Activated CD4-positive, alpha-beta memory T cell treated with anti-CD3 and anti-CD28 coated beads for 36 hours (primary cell): ENCODE measurements at regions of chr7 and their contacts with region 1.

Region 1: GRCh38 chr7:99918959-99919813 is at the start of gene TRIM4:
- DNase-seq: peak; percentile 96
- H3K4me3 Mint-ChIP-seq: peak within 1 kb of the TSS; percentile 98
- H3K27ac Mint-ChIP-seq: peak within 1 kb of the TSS; percentile 98
- H3K4me1 Mint-ChIP-seq: peaks cover 43% of the 10 kb centered on the region
- H3K27me3 Mint-ChIP-seq: no peaks in the 10 kb centered on the region
- total RNA-seq, gene TRIM4: 24.9 to 26.1 TPM

Region 2: DNA sequence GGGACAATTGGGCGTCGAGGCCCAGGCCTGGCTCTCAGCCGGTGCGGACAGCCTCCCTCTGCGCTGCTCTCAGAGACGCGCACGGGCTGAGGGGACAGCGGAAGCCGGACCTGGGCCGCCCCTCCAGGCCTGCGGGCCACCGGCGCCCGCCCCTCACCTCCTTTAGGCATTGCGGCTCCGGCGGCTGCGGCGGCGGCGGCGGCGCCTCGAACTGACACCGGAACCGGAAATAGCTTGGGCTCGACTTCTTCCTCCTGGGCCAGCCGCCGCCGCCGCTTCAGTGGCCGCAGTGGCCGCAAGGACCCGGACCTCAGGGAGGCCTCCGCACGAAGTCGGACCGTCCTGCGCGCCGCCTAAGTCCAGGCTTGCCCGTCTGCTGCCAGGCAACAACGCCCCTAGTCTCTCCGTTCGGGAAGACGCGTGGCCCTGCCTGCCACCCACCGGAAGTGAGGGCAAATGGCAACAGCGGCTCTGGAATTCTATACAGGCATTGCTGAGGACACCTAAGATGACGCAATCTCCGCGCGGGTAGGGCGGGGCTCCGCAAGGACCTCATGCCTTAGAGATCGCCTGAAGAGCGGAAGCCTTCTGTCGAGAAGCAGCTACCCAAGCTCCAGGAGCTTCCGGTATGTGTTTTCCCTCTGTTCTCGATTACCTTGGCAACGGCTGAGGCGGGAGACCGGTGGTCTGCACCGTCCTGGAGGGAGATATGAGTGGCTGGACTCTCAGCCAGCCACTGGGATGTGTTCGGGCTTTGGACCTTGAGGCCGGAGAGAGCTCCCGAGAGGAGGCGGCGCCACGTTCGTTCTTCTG is 510.6 kb before region 1 on chr7 and contains the starts of genes BUD31 and PDAP1:
- CTCF ChIA-PET with region 1: no interaction called
- POLR2A ChIA-PET with region 1: no interaction called
- intact Hi-C with region 1: loop called (anchors 1 kb)
- DNase-seq: peak; percentile 97
- H3K4me3 Mint-ChIP-seq: peak within 1 kb of the TSS; percentile 99
- H3K27ac Mint-ChIP-seq: peak within 1 kb of the TSS; percentile 99
- H3K4me1 Mint-ChIP-seq: peaks cover 41% of the 10 kb centered on the region
- H3K27me3 Mint-ChIP-seq: no peaks in the 10 kb centered on the region
- total RNA-seq, gene BUD31: 143 to 149 TPM
- total RNA-seq, gene PDAP1: 149 to 162 TPM

Region 3: DNA sequence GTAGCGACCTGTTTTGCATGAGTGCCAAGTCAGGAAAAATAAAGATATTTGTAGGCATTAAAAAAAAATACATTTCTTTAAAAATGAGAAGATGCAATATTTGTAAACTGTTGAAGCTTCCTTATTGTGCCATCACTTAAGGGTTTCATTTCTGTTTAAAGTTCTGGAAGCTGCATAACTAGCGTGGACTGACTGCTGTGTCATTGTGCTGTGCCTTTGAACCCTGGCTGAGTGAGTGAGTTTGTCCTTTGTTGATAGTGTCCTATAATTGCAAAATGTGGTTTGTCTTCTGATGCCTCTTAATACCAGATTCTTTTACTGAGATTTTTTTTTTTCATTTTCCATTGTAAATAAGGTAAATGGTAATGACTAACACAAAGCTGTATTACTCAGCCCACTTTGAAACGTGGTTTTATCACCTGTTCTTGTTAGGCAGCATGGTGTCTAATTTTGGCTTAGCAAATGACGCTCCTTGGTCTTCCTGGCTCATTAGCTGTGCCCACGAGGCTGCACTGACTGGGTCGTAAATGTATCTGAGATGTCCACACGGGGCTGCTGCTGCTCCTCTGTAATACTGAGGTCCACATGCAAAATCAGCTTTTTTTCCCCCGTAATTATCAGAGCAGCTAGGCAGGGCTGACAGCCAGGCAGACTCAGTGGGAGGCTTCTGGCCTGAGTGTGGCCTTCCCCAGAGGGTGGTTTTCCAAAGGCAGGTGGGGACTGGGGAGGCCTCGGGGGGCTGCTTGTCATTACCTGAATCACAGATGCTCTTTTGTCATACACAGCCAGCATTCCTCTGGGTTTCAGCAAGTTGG is 287.7 kb before region 1 on chr7:
- CTCF ChIA-PET with region 1: interaction called, 6 read pairs
- POLR2A ChIA-PET with region 1: no interaction called
- intact Hi-C with region 1: loop called (anchors 10 kb)
- DNase-seq: peak; percentile 60
- H3K4me3 Mint-ChIP-seq: no peak overlapping the region
- H3K27ac Mint-ChIP-seq: peak overlapping the region; percentile 72
- H3K4me1 Mint-ChIP-seq: peaks cover 22% of the 10 kb centered on the region
- H3K27me3 Mint-ChIP-seq: no peaks in the 10 kb centered on the region

Region 4: DNA sequence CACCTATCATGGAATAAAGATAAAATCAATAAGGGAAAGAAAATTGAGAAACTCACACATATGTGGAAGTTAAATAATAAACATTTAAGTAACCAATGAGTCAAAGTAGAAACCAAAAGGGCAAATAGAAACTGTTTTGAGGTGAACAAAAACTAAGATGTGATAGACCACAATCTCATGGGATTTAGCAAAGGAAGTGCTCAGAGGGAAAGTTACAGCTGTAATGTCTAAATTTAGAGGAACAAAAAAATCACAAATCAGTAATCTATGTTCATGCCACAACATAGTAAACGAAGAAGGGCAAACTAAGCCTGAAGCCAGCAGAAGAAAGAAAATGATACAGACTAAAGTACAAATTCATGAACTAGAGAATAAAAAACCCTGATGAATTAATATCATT is 151.5 kb before region 1 on chr7:
- CTCF ChIA-PET with region 1: no interaction called
- POLR2A ChIA-PET with region 1: no interaction called
- intact Hi-C with region 1: no loop called
- DNase-seq: no peak
- H3K4me3 Mint-ChIP-seq: no peak overlapping the region
- H3K27ac Mint-ChIP-seq: no peak overlapping the region
- H3K4me1 Mint-ChIP-seq: peaks cover 4% of the 10 kb centered on the region
- H3K27me3 Mint-ChIP-seq: peaks cover 31% of the 10 kb centered on the region

Region 5: DNA sequence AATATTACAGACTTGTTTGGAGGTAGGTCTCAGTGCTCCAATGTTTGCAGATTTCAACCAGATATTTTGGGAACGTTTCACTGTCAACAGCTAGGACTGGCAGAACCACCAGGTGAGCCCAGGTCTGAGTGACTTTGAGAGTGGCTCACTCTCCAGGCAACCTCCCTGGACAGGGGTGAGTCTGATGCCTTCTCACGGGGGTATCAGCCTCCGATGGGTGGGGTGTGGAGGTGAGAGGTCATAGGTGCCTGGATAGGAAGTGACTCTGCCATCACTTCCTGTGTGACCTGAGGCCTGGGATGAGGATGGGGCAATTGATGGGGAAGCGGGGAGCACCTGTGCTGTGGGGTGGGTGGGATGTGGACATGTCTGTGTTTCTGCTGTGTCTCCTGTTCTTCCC is 52.1 kb after region 1 on chr7:
- CTCF ChIA-PET with region 1: no interaction called
- POLR2A ChIA-PET with region 1: no interaction called
- intact Hi-C with region 1: no loop called
- DNase-seq: no peak
- H3K4me3 Mint-ChIP-seq: no peak overlapping the region
- H3K27ac Mint-ChIP-seq: no peak overlapping the region
- H3K4me1 Mint-ChIP-seq: no peaks in the 10 kb centered on the region
- H3K27me3 Mint-ChIP-seq: peaks cover 9% of the 10 kb centered on the region

Region 6: GRCh38 chr7:99990460-99990852 is 71.3 kb after region 1 on chr7:
- CTCF ChIA-PET with region 1: interaction called, 148 read pairs
- POLR2A ChIA-PET with region 1: interaction called, 3 read pairs
- intact Hi-C with region 1: no loop called
- DNase-seq: no peak
- H3K4me3 Mint-ChIP-seq: no peak overlapping the region
- H3K27ac Mint-ChIP-seq: no peak overlapping the region
- H3K4me1 Mint-ChIP-seq: no peaks in the 10 kb centered on the region
- H3K27me3 Mint-ChIP-seq: no peaks in the 10 kb centered on the region

Region 7: DNA sequence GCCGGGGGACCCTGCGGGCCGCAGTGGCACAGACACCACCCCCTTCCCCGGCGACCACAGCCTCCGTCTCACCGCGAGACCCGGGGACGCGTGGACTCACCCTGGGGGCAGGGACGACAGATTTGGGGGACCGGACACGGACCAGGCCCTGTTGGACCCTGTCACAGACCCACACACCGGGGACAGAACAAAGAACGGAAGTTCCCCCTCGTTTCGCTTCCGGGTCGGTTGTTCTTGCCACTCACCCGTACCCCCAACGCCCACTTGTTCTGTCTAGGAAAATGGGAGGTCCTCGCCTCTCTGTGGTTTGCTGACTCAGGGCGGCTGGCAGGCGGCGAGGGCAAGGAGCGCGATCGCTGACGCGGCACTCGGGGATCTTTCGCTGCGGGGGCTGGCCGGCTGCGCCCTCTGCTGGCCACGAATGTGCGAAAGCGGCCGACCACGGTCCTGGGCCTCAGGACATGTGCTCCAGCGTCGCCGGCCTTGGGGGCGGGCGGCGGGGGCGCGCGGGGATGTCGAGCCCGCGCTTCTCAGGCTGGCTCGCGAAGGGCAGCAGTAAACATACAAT is 162.4 kb after region 1 on chr7 and contains the start of gene ZNF3:
- CTCF ChIA-PET with region 1: interaction called, 6 read pairs
- POLR2A ChIA-PET with region 1: no interaction called
- intact Hi-C with region 1: loop called (anchors 2 kb)
- DNase-seq: peak; percentile 99
- H3K4me3 Mint-ChIP-seq: peak within 1 kb of the TSS; percentile 83
- H3K27ac Mint-ChIP-seq: peak within 1 kb of the TSS; percentile 85
- H3K4me1 Mint-ChIP-seq: peaks cover 29% of the 10 kb centered on the region
- H3K27me3 Mint-ChIP-seq: no peaks in the 10 kb centered on the region
- total RNA-seq, gene ZNF3: 18.0 to 18.6 TPM